Breast epithelium (tissue), 4 donors: ENCODE measurements at regions of chr1 and their contacts with region 1.

Region 1: DNA sequence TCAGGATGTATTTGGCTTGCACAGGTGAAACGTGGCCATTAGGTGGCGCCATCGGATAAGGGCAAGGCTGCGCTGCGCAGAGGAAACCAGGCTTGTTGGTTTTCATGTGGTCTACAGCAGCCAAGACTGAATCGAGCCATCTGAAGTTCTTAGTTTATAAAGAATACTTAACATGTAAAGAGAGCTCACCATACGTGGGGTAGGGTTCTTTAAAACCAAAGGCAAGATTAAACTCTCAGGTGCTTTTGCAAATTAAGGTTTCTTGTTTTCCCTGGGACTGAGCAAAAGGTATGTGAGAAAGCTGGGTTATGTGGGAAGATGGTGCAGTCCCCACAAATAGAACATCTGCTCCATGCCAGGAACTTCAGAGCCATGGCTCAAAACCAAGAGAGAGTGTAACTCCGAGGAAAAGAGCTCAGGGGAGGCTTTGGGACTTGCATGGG is 9.3 kb downstream of the MASP2 start:
- DNase-seq: peak; percentile 83 to 87
- H3K4me3 ChIP-seq: no peak overlapping the region
- H3K27ac ChIP-seq: no peak overlapping the region
- H3K4me1 ChIP-seq: no peaks in the 10 kb centered on the region
- H3K27me3 ChIP-seq: no peaks in the 10 kb centered on the region
- CTCF ChIP-seq: peak; percentile 71 to 97 (median 95)
- POLR2A ChIP-seq: no peak

Region 2: GRCh38 chr1:10065344-10065685 is 972.4 kb before region 1 on chr1:
- intact Hi-C with region 1: no loop called
- DNase-seq: no peak
- H3K4me3 ChIP-seq: no peak overlapping the region
- H3K27ac ChIP-seq: peak overlapping the region in 1 of 2 donors; percentile 10
- H3K4me1 ChIP-seq: no peaks in the 10 kb centered on the region
- H3K27me3 ChIP-seq: no peaks in the 10 kb centered on the region
- CTCF ChIP-seq: no peak
- POLR2A ChIP-seq: no peak

Region 3: DNA sequence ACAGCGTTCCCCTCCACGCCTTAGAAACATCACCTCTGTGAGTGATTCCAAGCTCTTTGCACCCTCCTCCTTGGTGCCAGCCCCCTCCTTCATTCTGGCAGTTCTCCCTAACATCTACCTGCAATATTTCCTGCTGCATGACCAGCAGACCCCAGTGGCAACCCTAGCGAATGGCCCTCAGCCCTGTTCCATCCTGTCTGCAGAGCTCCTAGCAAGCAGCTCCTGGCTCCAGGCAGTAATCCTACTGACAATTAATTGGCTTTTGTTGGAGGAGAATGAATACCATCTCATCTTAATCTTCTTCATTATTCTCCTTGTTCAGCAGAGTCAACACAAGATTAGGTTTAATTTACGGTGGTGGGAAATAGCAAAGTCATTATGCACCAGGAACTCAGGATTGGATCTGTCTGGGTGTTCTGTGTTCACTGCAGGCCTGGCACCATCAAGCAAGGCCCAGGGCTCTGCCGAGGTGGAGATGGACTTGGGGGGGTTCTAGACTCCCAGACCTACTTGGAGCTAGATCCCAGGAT is 604.1 kb after region 1 on chr1:
- intact Hi-C with region 1: loop called (anchors 5 kb)
- DNase-seq: no peak
- H3K4me3 ChIP-seq: no peak overlapping the region
- H3K27ac ChIP-seq: no peak overlapping the region
- H3K4me1 ChIP-seq: no peaks in the 10 kb centered on the region
- H3K27me3 ChIP-seq: peaks cover 0 to 13% of the 10 kb centered on the region in 2 donors
- CTCF ChIP-seq: no peak
- POLR2A ChIP-seq: no peak